ENCODE measurements at regions of chr7 and their contacts with region 1.

Region 1: DNA sequence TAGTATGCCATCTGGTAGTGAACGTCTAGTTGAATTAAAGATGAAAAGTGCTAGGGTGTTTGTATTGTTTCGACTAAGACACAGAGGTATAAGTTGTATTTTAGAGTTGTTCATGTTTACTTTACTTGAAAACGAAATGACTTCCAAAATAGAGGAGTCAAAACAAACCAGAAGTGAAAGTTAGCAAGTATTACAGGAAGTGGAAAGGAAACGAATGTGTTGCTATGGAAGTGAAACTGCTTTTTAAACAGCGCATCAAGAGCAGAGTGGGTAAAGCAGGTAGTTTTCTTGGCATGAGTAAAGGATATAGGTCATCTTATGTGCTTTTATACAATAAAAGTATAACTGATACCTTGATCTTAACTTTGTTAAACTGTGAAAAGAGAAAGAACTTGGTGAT is 20.0 kb upstream of the GALNTL5 start:
- DNase-seq: no peak
- H3K4me3 ChIP-seq: no peak overlapping the region
- CTCF ChIP-seq: no peak
- POLR2A ChIP-seq: no peak

Region 2: GRCh38 chr7:151782598-151783448 is 153.4 kb before region 1 on chr7:
- intact Hi-C with region 1: loop called (anchors 5 kb)
- DNase-seq: peak; percentile 55 to 95
- H3K4me3 ChIP-seq: no peak overlapping the region
- CTCF ChIP-seq: peak in 1 of 3 donors; percentile 59
- POLR2A ChIP-seq: no peak

Region 3: GRCh38 chr7:151921451-151921850 is 14.8 kb before region 1 on chr7:
- intact Hi-C with region 1: loop called (anchors 1 kb)
- DNase-seq: no peak
- H3K4me3 ChIP-seq: no peak overlapping the region
- CTCF ChIP-seq: no peak
- POLR2A ChIP-seq: no peak